ENCODE measurements at regions of chr6 and their contacts with region 1.

Region 1: DNA sequence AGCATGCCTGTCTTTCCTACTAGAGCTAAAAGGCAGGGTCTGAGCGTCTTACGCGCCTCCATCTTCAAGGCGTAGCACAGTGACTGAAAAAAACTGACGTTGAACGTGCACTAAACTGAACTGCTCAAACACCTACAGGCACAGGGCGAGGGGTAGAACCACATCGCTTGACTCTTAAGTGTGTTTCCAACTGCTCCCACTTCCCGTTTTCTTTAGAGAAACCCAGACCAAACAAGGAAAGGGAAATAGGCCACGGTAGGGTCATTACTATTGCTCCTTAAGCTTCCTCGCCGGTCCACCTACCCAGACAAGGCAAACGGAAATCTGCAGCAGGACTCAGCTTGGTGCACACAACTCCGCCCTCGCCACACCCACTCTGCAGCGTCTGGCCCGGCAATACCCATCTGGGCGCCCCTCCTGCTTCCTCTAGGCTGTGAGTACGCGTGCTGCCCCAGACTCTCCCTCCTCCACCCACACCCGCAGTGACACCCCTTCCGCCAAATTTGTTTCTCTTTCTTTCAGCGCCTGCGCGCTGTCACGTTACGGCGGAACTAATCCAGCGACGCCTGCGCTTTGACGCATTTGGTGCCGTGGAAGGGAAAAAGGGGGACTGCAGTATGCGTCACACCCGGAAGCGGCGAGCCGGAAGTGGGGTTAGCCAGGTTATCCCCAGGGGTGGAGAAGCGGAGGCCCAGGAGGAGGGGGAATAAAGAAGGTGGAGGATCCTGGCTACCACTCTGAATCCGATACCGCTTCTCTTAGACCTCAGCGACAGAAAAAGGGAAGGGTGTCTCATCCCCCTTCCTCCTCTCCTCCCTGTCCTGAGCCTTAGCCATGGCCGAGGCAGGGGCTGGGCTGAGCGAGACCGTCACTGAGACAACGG is at the start of gene PPP1R11:
- DNase-seq: peak; percentile 99
- H3K4me3 ChIP-seq: peak within 1 kb of the TSS; percentile 68 to 79 (median 72)
- H3K27ac ChIP-seq: peak within 1 kb of the TSS; percentile 82 to 89 (median 88)
- H3K4me1 ChIP-seq: peaks cover 28 to 53% (median 49%) of the 10 kb centered on the region in 4 donors
- H3K27me3 ChIP-seq: peaks cover 0 to 15% (median 10%) of the 10 kb centered on the region in 4 donors
- CTCF ChIP-seq: peak in 1 of 3 experiments; percentile 4
- EP300 ChIP-seq: no peak
- POLR2A ChIP-seq: peak; percentile 45
- total RNA-seq, gene PPP1R11: 50.7 to 64.7 (median 60.2) TPM

Region 2: DNA sequence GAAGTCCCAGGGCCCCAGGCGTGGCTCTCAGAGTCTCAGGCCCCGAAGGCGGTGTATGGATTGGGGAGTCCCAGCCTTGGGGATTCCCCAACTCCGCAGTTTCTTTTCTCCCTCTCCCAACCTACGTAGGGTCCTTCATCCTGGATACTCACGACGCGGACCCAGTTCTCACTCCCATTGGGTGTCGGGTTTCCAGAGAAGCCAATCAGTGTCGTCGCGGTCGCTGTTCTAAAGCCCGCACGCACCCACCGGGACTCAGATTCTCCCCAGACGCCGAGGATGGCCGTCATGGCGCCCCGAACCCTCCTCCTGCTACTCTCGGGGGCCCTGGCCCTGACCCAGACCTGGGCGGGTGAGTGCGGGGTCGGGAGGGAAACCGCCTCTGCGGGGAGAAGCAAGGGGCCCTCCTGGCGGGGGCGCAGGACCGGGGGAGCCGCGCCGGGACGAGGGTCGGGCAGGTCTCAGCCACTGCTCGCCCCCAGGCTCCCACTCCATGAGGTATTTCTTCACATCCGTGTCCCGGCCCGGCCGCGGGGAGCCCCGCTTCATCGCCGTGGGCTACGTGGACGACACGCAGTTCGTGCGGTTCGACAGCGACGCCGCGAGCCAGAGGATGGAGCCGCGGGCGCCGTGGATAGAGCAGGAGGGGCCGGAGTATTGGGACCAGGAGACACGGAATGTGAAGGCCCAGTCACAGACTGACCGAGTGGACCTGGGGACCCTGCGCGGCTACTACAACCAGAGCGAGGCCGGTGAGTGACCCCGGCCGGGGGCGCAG is 124.4 kb before region 1 on chr6 and contains the start of gene HLA-A:
- intact Hi-C with region 1: loop called (anchors 10 kb)
- DNase-seq: peak; percentile 99
- H3K4me3 ChIP-seq: peak within 1 kb of the TSS; percentile 56 to 82 (median 64)
- H3K27ac ChIP-seq: peak within 1 kb of the TSS; percentile 82 to 92 (median 89)
- H3K4me1 ChIP-seq: peaks cover 3 to 30% (median 13%) of the 10 kb centered on the region in 4 donors
- H3K27me3 ChIP-seq: no peaks in the 10 kb centered on the region
- CTCF ChIP-seq: no peak
- EP300 ChIP-seq: no peak
- POLR2A ChIP-seq: peak; percentile 85
- total RNA-seq, gene HLA-A: 243 to 610 (median 499) TPM

Measured in esophagus muscularis mucosa (tissue), 4 donors.